CD4-positive, alpha-beta memory T cell (primary cell): ENCODE measurements at regions of chr7 and their contacts with region 1.

Region 1: DNA sequence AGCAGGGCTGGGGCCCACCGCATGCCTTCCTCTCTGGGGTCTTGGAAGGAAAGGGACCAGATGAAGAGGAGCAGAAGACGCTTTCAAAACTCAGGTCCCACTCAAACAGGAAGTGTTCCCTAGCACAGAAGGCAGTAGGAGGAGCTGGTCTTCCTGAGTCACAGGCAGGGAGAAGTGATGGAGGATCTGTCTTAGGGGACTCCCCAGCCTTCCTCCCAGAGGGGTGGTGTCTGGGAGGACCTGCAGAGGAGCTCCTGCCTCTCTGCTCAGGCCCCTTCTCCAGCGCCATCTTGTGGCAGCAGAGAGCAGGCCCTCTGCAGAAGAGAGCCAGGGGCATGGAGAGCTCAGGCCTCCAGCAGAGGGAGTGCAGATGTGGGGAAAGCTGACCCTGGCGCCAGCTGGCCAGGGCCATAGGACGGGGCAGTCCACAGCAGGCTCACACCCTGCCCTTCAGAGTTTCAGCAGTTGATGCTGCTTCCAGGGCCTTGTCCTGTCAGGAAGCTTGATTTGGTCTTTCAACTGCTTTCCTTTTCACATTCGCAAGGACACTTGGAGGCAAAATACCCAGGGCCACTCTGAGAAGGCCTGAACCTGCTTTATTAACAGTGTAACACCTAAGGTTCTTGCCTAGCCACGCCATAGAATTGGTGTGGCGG is 62.2 kb upstream of the TARP start:
- DNase-seq: peak; percentile 68 to 84 (median 74)
- H3K4me3 ChIP-seq: peak overlapping the region in 1 of 2 donors; percentile 18
- H3K4me3 Mint-ChIP-seq: peak overlapping the region; percentile 73 to 84 (median 79)
- H3K27ac ChIP-seq: peak overlapping the region; percentile 47
- H3K27ac Mint-ChIP-seq: peak overlapping the region; percentile 61 to 91 (median 87)
- H3K4me1 ChIP-seq: peaks cover 17% of the 10 kb centered on the region
- H3K4me1 Mint-ChIP-seq: peaks cover 16 to 53% (median 19%) of the 10 kb centered on the region in 4 donors
- H3K27me3 ChIP-seq: no peaks in the 10 kb centered on the region
- H3K27me3 Mint-ChIP-seq: no peaks in the 10 kb centered on the region

Region 2: DNA sequence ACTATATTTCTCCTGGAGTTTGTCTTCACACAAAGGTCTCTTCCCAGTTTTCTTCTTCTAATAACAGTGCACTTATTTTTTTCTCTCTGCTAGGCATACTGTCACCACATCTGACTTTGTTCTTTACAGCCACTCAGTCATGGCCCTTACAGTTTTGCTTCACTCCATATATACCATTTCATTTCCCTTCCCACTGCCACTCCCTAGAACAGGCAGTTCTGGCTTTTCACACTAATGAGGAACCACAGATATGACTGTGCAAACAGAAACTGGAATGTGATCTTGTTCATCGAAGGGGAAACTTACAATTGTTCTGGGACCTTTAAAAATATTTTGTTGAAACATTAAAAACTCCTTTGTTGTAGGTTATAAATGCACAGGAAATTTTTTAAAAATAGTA is 347.9 kb before region 1 on chr7:
- CTCF ChIA-PET with region 1: no interaction called
- POLR2A ChIA-PET with region 1: no interaction called
- intact Hi-C with region 1: no loop called
- DNase-seq: no peak
- H3K4me3 ChIP-seq: no peak overlapping the region
- H3K4me3 Mint-ChIP-seq: no peak overlapping the region
- H3K27ac ChIP-seq: no peak overlapping the region
- H3K27ac Mint-ChIP-seq: no peak overlapping the region
- H3K4me1 ChIP-seq: no peaks in the 10 kb centered on the region
- H3K4me1 Mint-ChIP-seq: no peaks in the 10 kb centered on the region
- H3K27me3 ChIP-seq: no peaks in the 10 kb centered on the region
- H3K27me3 Mint-ChIP-seq: peaks cover 2 to 4% of the 10 kb centered on the region in 2 donors

Region 3: DNA sequence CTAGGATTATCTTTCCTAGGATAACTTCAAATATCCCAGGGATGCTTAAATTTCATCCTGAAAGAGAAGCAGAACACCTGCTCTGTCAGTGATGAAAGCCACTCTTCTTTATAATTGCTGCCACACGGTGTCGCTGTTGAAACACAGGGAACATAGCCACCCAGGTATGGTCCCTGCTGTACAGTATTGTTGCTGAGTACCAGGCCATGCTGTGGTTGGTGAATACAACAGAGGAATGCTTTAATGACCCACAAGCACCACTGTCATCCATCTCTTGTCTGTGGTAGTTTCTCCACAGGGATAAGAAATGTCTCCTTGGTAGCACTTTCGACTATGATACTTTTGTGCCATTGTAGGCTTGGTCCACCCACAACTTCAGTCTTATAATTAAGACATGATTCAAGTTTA is 228.1 kb before region 1 on chr7:
- CTCF ChIA-PET with region 1: interaction called, 34 read pairs
- POLR2A ChIA-PET with region 1: no interaction called
- intact Hi-C with region 1: loop called (anchors 1 kb)
- DNase-seq: peak; percentile 51 to 62 (median 54)
- H3K4me3 ChIP-seq: no peak overlapping the region
- H3K4me3 Mint-ChIP-seq: no peak overlapping the region
- H3K27ac ChIP-seq: no peak overlapping the region
- H3K27ac Mint-ChIP-seq: no peak overlapping the region
- H3K4me1 ChIP-seq: no peaks in the 10 kb centered on the region
- H3K4me1 Mint-ChIP-seq: peaks cover 0 to 2% (median 0%) of the 10 kb centered on the region in 4 donors
- H3K27me3 ChIP-seq: no peaks in the 10 kb centered on the region
- H3K27me3 Mint-ChIP-seq: peaks cover 13 to 15% of the 10 kb centered on the region in 2 donors

Region 4: GRCh38 chr7:38222481-38223096 is 113.0 kb before region 1 on chr7:
- CTCF ChIA-PET with region 1: interaction called, 202 read pairs
- POLR2A ChIA-PET with region 1: interaction called, 7 read pairs
- intact Hi-C with region 1: no loop called
- DNase-seq: peak in 4 of 5 donors; percentile 52 to 61 (median 58)
- H3K4me3 ChIP-seq: no peak overlapping the region
- H3K4me3 Mint-ChIP-seq: peak overlapping the region in 1 of 8 donors; percentile 1
- H3K27ac ChIP-seq: no peak overlapping the region
- H3K27ac Mint-ChIP-seq: peak overlapping the region in 6 of 7 donors; percentile 0 to 79 (median 53)
- H3K4me1 ChIP-seq: peaks cover 46% of the 10 kb centered on the region
- H3K4me1 Mint-ChIP-seq: peaks cover 20 to 68% (median 40%) of the 10 kb centered on the region in 4 donors
- H3K27me3 ChIP-seq: no peaks in the 10 kb centered on the region
- H3K27me3 Mint-ChIP-seq: no peaks in the 10 kb centered on the region

Region 5: DNA sequence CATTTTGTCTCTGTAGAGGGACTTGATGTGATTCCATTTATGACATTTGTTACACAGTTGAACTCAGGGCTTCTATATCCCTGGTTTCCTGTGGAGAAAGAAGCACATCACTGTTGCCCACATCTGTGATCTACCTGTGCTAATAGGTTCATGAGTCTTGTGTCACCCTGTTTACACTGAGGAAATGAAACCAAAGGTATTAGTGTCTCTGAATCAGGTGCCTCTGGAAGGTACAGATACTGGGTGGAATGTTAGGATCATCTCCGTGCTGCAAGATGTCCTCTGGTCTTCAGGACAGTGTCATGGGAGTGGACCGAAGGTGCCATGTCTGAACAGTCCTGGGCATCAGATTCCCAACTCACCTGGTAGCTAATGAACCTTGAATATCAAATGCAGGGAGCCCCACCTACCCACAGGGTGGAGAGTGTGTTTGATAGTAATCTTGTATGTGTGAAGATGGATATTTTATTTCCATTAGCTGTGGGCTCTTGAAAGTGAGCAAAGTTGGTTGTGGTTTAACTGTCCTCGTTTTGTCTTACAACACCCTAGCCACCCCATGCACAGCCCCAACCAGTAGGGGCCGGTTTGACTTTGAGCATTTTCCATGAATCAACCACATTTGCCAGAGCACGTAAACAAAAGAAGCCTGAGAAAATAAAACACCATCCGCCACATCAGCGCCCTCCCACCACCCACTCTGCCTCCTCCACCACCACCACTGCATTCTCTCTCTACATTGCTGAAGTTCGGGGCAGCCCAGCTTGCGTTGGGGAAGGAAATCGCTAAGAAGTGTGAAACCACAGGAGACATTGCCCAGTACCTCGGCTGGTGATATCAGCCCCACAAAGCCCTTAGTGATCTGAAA is 102.9 kb before region 1 on chr7:
- CTCF ChIA-PET with region 1: interaction called, 22 read pairs
- POLR2A ChIA-PET with region 1: interaction called, 9 read pairs
- intact Hi-C with region 1: no loop called
- DNase-seq: peak; percentile 79 to 91 (median 89)
- H3K4me3 ChIP-seq: peak overlapping the region in 1 of 2 donors; percentile 38
- H3K4me3 Mint-ChIP-seq: peak overlapping the region; percentile 39 to 88 (median 82)
- H3K27ac ChIP-seq: peak overlapping the region; percentile 61
- H3K27ac Mint-ChIP-seq: peak overlapping the region; percentile 91 to 96 (median 96)
- H3K4me1 ChIP-seq: peaks cover 77% of the 10 kb centered on the region
- H3K4me1 Mint-ChIP-seq: peaks cover 27 to 96% (median 67%) of the 10 kb centered on the region in 4 donors
- H3K27me3 ChIP-seq: no peaks in the 10 kb centered on the region
- H3K27me3 Mint-ChIP-seq: no peaks in the 10 kb centered on the region

Region 6: GRCh38 chr7:38306171-38306570 is 29.4 kb before region 1 on chr7:
- CTCF ChIA-PET with region 1: interaction called, 12 read pairs
- POLR2A ChIA-PET with region 1: no interaction called
- intact Hi-C with region 1: no loop called
- DNase-seq: peak in 1 of 5 donors; percentile 53
- H3K4me3 ChIP-seq: no peak overlapping the region
- H3K4me3 Mint-ChIP-seq: peak overlapping the region; percentile 36 to 82 (median 68)
- H3K27ac ChIP-seq: no peak overlapping the region
- H3K27ac Mint-ChIP-seq: peak overlapping the region; percentile 57 to 97 (median 95)
- H3K4me1 ChIP-seq: peaks cover 35% of the 10 kb centered on the region
- H3K4me1 Mint-ChIP-seq: peaks cover 0 to 27% (median 7%) of the 10 kb centered on the region in 4 donors
- H3K27me3 ChIP-seq: no peaks in the 10 kb centered on the region
- H3K27me3 Mint-ChIP-seq: no peaks in the 10 kb centered on the region

Region 7: DNA sequence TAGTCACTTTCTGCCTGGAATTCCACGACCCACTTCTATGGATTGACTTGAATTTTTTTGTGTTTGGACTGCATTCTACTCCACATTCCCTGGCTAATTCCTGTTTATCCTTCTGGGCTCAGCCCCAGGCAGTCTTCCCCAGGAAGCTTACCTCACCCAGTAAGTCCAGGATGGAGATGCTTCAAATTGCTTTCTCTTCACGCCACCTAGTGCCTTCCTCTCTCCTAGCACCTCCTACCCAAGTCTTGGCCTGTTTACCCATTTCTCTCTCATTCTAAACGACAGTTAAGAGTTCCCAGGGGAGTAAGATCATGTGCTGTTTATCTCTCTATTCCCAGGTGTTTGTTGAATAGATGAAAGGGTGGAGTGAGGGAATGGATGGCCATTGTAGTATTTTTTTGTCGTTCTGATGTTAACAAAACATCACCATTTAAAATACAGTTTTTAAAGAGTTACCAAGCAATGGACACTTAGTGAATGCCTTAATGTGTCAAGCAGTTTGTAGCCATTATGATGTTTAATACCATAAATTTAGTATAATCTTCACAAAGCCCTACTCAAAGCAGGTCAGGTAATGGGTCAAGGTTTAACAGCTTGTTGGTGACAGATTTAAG is 16.7 kb before region 1 on chr7:
- CTCF ChIA-PET with region 1: interaction called, 62 read pairs
- POLR2A ChIA-PET with region 1: interaction called, 8 read pairs
- intact Hi-C with region 1: loop called (anchors 2 kb)
- DNase-seq: no peak
- H3K4me3 ChIP-seq: no peak overlapping the region
- H3K4me3 Mint-ChIP-seq: peak overlapping the region; percentile 70 to 87 (median 72)
- H3K27ac ChIP-seq: peak overlapping the region; percentile 31
- H3K27ac Mint-ChIP-seq: peak overlapping the region; percentile 72 to 90 (median 87)
- H3K4me1 ChIP-seq: peaks cover 36% of the 10 kb centered on the region
- H3K4me1 Mint-ChIP-seq: peaks cover 15 to 43% (median 22%) of the 10 kb centered on the region in 4 donors
- H3K27me3 ChIP-seq: no peaks in the 10 kb centered on the region
- H3K27me3 Mint-ChIP-seq: no peaks in the 10 kb centered on the region

Region 8: GRCh38 chr7:38351601-38352000 is 16.0 kb after region 1 on chr7:
- CTCF ChIA-PET with region 1: interaction called, 67 read pairs
- POLR2A ChIA-PET with region 1: interaction called, 5 read pairs
- intact Hi-C with region 1: no loop called
- DNase-seq: no peak
- H3K4me3 ChIP-seq: no peak overlapping the region
- H3K4me3 Mint-ChIP-seq: peak overlapping the region; percentile 86 to 94 (median 90)
- H3K27ac ChIP-seq: no peak overlapping the region
- H3K27ac Mint-ChIP-seq: peak overlapping the region in 4 of 7 donors; percentile 52 to 92 (median 73)
- H3K4me1 ChIP-seq: peaks cover 12% of the 10 kb centered on the region
- H3K4me1 Mint-ChIP-seq: peaks cover 14 to 42% (median 26%) of the 10 kb centered on the region in 4 donors
- H3K27me3 ChIP-seq: no peaks in the 10 kb centered on the region
- H3K27me3 Mint-ChIP-seq: no peaks in the 10 kb centered on the region